ENCODE measurements at regions of chr14 and their contacts with region 1.

Region 1: DNA sequence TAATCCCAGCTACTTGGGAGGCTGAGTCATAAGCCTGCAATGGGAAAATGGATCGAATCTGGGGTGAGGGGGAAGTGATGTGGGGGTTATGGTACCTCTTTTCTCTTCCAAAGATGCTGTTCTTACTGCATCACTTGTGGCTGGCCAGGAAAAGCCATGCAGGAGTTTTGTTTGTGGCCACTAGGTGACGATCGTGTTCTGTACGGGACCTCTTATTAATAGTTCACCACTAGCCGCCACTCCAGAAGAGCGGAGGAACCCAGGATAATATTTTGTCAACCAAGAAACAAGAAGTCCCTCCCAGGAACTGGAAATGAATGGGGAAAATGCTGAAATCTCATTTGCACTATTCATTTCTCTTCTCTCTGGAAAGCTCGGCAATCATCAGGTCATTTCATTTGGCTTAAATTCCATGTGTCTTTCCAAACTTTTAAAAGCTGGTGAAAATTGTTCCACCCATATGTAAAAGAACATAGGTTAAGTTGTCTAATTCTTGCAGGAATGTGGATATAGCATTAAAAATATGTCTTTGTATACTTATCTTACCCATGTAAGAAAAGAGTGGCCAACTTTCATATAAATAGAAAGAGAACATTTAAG is 8.9 kb downstream of the GPR65 start:
- DNase-seq: peak; percentile 9 to 35
- H3K4me3 ChIP-seq: no peak overlapping the region
- H3K27ac ChIP-seq: no peak overlapping the region
- H3K4me1 ChIP-seq: no peaks in the 10 kb centered on the region
- H3K27me3 ChIP-seq: 0 out of 2 replicates have a peak, but pooled peaks cover 2% of the 10 kb centered on the region
- CTCF ChIP-seq: peak; percentile 79

Region 2: GRCh38 chr14:89417469-89418225 is 1403.8 kb after region 1 on chr14:
- CTCF ChIA-PET with region 1: interaction called, 11 read pairs
- POLR2A ChIA-PET with region 1: no interaction called
- intact Hi-C with region 1: no loop called
- DNase-seq: peak in 1 of 2 experiments; percentile 14
- H3K4me3 ChIP-seq: no peak overlapping the region
- H3K27ac ChIP-seq: no peak overlapping the region
- H3K4me1 ChIP-seq: no peaks in the 10 kb centered on the region
- H3K27me3 ChIP-seq: no peaks in the 10 kb centered on the region
- CTCF ChIP-seq: no peak

Measured in PC-9 (cell line).